Upper lobe of right lung (tissue), 1 donor: ENCODE measurements at regions of chr2 and their contacts with region 1.

Region 1: GRCh38 chr2:121530212-121530705 is 421 bp upstream of the RNU4ATAC start:
- DNase-seq: peak; percentile 92
- ATAC-seq: peak; percentile 87
- H3K4me3 ChIP-seq: peak overlapping the region; percentile 64
- H3K27ac ChIP-seq: peak overlapping the region; percentile 100
- H3K4me1 ChIP-seq: peaks cover 34% of the 10 kb centered on the region
- H3K27me3 ChIP-seq: no peaks in the 10 kb centered on the region
- CTCF ChIP-seq: no peak

Region 2: GRCh38 chr2:121471532-121472469 is 58.5 kb before region 1 on chr2:
- intact Hi-C with region 1: no loop called
- DNase-seq: no peak
- ATAC-seq: no peak
- H3K4me3 ChIP-seq: no peak overlapping the region
- H3K27ac ChIP-seq: no peak overlapping the region
- H3K4me1 ChIP-seq: peaks cover 10% of the 10 kb centered on the region
- H3K27me3 ChIP-seq: no peaks in the 10 kb centered on the region
- CTCF ChIP-seq: no peak

Region 3: DNA sequence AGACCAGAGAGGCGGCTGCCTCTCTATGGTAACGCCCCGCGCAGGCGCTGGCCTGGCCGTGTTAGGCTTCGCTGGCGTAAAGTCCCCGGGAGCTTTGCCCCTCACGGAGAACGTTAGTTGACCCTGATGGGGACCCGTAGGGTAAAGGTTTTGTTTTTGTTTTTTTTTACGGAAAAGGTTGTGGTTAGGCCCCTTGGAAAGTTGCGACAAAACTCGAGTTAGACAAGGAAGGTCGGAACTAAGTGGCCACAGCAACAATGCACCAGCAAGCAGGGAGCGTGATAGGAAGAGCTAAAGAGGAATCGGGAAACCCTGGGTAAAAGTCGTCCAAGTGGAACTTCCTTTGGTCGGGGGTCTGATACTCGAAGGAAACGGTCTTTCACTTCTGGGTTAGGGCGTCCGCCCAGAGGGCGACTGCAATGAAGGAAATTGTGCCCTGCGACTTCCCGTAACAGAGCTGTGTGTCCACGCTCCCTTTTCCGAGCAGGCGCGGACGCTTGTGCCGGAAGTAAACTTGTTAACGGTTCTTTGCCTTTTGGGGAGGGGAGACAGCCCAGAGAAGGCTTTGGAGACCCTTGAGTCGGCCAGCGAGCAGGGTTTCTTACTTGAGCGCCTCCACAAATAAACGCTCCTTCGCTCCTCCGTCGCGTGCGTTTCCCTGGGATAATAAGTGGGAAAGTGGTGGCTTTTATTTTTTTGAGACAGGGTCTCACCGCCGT is 119.5 kb after region 1 on chr2:
- intact Hi-C with region 1: loop called (anchors 10 kb)
- DNase-seq: peak; percentile 98
- ATAC-seq: peak; percentile 98
- H3K4me3 ChIP-seq: peak overlapping the region; percentile 88
- H3K27ac ChIP-seq: peak overlapping the region; percentile 97
- H3K4me1 ChIP-seq: peaks cover 27% of the 10 kb centered on the region
- H3K27me3 ChIP-seq: no peaks in the 10 kb centered on the region
- CTCF ChIP-seq: no peak

Region 4: DNA sequence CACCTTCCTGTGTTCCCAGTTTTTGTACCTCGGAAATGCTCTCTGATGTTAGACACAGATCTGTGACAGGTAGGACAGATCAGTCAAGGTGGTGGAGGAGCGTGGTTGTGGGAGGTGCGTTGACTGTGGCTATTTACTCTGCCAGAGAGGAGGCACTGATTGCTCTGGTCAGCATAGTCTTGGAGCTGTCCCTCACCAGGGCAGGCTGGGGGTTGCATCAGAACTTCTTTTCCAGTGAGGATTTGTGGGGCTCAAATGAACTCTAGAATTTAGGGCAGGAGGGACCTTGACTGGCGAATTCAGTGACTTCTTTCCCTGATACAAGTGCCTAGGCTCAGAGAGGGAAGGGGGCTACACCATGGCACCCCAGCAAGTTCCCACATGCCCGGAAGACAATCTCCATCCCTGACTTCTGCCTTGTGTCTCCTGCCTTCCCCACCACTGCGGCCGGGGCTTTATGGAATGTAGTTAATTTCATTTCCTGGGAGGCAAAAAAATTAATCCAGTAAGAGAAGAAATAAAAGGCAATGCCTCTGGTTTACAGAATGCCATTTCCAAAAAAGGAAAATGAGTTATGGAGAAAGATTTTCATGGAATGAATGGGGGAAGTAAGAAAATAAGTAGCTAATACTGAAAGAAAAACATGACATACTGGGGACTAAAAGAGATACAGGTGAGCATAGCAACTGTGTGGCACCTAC is 180.4 kb after region 1 on chr2:
- intact Hi-C with region 1: loop called (anchors 10 kb)
- DNase-seq: no peak
- ATAC-seq: no peak
- H3K4me3 ChIP-seq: no peak overlapping the region
- H3K27ac ChIP-seq: no peak overlapping the region
- H3K4me1 ChIP-seq: no peaks in the 10 kb centered on the region
- H3K27me3 ChIP-seq: no peaks in the 10 kb centered on the region
- CTCF ChIP-seq: no peak